Naive thymus-derived CD8-positive, alpha-beta T cell (primary cell): ENCODE measurements at regions of chr6 and their contacts with region 1.

Region 1: DNA sequence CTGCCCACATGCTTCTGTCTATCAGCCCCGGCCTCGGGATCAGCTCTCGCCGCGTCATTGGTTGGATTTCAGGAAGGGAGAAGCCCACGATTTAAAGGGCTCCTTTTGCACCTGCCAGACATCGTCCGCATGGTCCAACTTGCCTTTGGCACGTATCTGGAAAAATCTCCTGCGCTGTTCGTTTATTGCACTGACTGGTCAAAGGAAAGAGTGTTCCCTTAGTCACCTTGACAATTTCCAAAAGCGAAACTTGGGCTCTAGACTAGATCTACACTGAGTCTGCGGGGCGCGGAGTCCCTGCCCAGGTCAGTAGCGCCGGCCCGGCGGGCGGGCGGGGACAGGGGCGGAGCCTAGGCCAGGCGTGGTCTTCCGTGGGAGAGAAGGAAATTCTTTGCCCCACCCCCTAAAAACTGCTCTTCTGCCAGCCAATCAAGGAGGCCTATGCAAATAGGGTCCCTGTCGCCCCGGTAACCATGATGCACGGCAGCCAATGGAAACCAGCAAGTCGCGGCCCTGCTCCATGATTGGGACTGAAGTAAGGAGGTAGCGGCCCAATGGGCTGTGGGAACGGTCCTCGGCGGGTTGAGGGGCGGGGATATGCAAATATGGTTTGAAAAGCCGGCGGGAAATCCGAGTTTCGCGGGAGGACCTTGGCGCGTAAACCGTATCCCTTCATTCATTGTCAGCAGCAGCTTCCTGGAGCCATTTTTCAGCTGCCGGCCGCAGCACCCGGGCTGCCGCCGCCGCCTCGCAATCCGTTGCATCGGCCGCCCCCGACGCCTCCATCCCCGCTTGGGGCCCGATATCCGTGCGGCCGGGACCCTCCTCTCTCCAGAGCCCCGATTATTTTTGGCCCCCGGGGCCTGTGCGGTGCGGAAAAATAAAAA is at the start of gene E2F3:
- DNase-seq: peak; percentile 91 to 100 (median 99)
- ATAC-seq: peak; percentile 85 to 89
- H3K4me3 Mint-ChIP-seq: peak within 1 kb of the TSS; percentile 88 to 98 (median 95)
- H3K27ac Mint-ChIP-seq: peak within 1 kb of the TSS; percentile 66 to 96 (median 87)
- H3K4me1 Mint-ChIP-seq: peaks cover 16 to 40% (median 30%) of the 10 kb centered on the region in 4 donors
- H3K27me3 Mint-ChIP-seq: no peaks in the 10 kb centered on the region
- polyA plus RNA-seq, gene E2F3: 4.9 to 8.0 (median 5.9) TPM

Region 2: DNA sequence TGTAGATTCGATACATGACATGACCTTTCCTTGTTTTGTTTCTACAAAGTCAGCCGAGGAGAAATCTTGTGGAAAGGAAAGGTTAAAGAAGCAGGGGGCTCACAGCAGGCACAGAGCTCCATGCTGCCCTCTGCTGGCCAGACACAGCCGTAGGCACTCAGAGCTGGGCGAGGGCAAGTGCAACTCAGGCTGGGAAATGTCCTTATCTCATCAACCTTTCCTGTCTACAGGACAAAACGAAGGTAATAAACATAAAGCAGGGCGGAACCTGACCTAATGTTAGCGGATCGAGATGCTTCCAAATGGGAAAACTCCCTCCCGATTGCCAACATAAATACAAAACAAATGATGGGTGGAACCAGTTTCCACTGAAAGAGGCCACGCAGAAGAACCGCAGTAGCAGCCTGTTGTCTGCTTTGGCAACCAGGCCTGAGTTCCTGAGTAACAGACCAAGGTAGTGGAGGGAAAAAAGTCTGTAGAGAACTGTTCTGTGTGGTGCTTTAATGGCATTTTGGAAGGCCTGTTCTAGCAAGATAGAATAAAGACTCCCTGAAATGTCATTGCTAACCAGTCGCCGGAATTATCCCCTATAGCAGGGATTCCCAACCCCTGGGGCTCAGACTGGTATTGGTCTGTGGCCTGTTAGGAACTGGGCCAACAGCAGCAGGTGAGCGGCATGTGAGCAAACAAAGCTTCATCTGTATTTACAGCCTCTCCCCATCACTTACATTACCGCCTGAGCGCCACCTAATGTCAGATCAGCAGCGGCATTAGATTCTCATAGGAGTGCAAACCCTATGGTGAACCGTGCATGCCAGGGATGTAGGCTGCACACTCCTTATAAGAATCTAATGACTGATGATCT is 274.4 kb before region 1 on chr6:
- POLR2A ChIA-PET with region 1: no interaction called
- DNase-seq: peak; percentile 8 to 68 (median 48)
- ATAC-seq: peak; percentile 42 to 52
- H3K4me3 Mint-ChIP-seq: no peak overlapping the region
- H3K27ac Mint-ChIP-seq: peak overlapping the region in 1 of 10 donors; percentile 56
- H3K4me1 Mint-ChIP-seq: peaks cover 0 to 4% (median 3%) of the 10 kb centered on the region in 4 donors
- H3K27me3 Mint-ChIP-seq: peaks cover 0 to 4% (median 0%) of the 10 kb centered on the region in 5 donors

Region 3: DNA sequence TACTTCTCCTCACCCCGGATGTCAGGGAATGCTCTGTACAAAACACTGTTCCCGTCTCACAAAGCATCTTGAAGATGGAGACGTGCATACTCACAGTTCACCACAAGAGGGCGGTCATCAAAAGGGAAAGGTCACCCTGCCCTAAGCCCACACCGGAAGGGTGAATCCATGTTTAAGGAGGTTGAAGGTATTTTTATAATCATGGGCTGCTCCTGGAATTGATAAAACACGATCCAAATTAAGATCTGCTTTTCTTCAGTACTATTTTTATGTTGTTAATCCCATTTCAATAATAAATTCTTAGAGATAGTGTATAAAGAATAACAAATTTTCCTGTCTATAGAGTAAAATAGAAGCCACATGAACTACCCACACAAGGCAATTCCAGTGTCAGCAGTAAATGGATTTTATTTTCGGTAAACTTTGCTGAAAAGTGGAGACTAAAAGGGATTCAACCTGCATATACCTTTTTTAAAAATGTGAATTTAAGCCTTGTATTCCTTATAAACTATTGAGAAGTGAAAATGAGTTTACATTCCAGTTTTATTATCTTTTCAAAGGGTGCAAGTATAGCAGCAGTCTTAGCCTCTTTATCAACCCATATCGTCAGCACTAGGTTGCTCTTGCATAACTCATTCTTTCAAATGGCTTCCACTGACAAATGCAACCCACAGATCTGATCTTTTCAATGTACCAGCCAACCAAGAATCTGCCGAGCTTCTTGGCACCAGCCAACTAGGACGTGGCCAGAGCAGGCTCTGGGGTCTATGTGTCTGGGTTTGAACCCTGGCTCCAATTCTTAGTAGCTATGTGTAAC is 109.5 kb before region 1 on chr6:
- POLR2A ChIA-PET with region 1: interaction called, 10 read pairs
- DNase-seq: peak; percentile 41 to 86 (median 69)
- ATAC-seq: peak; percentile 82 to 93
- H3K4me3 Mint-ChIP-seq: peak overlapping the region in 7 of 10 donors; percentile 1 to 76 (median 43)
- H3K27ac Mint-ChIP-seq: peak overlapping the region in 6 of 10 donors; percentile 2 to 48 (median 16)
- H3K4me1 Mint-ChIP-seq: peaks cover 8 to 20% (median 18%) of the 10 kb centered on the region in 4 donors
- H3K27me3 Mint-ChIP-seq: no peaks in the 10 kb centered on the region

Region 4: GRCh38 chr6:20334334-20334733 is 67.1 kb before region 1 on chr6:
- POLR2A ChIA-PET with region 1: interaction called, 17 read pairs
- DNase-seq: no peak
- ATAC-seq: no peak
- H3K4me3 Mint-ChIP-seq: no peak overlapping the region
- H3K27ac Mint-ChIP-seq: peak overlapping the region in 1 of 10 donors; percentile 12
- H3K4me1 Mint-ChIP-seq: peaks cover 17 to 32% (median 23%) of the 10 kb centered on the region in 4 donors
- H3K27me3 Mint-ChIP-seq: no peaks in the 10 kb centered on the region

Region 5: DNA sequence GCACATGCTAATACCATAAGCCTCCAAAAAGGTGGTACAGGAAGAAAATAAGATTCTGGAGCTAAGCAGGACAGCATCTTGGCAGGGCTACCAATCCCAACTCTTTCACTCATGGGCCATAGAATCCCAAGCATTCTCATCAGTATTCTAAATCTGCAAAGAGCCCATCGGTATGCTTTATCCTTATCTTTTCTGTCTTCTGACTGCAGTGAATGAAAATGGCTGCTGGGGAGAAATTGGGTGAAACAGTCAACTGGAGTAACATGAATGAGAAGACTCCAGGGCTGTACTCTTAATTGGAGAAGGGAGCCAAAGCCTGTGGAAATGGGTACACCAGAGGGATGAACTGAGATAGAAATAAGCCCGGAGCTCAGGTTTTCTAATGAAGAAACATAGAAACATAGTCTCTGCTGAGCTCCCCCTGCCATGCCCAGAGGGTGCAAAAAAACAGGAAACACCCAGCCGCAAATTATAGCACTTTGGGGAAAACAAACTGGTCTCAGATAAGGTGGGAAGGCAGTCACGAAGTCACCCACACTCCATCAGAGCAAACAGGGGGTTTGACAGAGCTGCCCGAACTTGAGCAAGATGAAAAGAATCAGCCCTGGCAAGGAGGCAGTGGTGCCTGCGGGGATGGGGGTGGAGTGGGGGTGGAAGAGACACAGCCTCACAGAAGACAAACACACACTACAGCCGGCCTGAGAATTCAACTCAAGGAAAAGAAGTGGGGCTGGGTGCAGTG is 35.2 kb before region 1 on chr6:
- POLR2A ChIA-PET with region 1: interaction called, 216 read pairs
- DNase-seq: peak; percentile 7 to 81 (median 42)
- ATAC-seq: peak; percentile 85 to 94
- H3K4me3 Mint-ChIP-seq: peak overlapping the region; percentile 64 to 90 (median 81)
- H3K27ac Mint-ChIP-seq: peak overlapping the region; percentile 86 to 99 (median 96)
- H3K4me1 Mint-ChIP-seq: peaks cover 34 to 66% (median 64%) of the 10 kb centered on the region in 4 donors
- H3K27me3 Mint-ChIP-seq: no peaks in the 10 kb centered on the region

Region 6: GRCh38 chr6:20377623-20378265 is 23.7 kb before region 1 on chr6:
- POLR2A ChIA-PET with region 1: interaction called, 10 read pairs
- DNase-seq: no peak
- ATAC-seq: no peak
- H3K4me3 Mint-ChIP-seq: no peak overlapping the region
- H3K27ac Mint-ChIP-seq: peak overlapping the region in 2 of 10 donors; percentile 29 to 63
- H3K4me1 Mint-ChIP-seq: peaks cover 6 to 29% (median 12%) of the 10 kb centered on the region in 4 donors
- H3K27me3 Mint-ChIP-seq: no peaks in the 10 kb centered on the region

Region 7: GRCh38 chr6:20497216-20498040 is 96.0 kb after region 1 on chr6:
- POLR2A ChIA-PET with region 1: no interaction called
- DNase-seq: no peak
- ATAC-seq: no peak
- H3K4me3 Mint-ChIP-seq: no peak overlapping the region
- H3K27ac Mint-ChIP-seq: no peak overlapping the region
- H3K4me1 Mint-ChIP-seq: no peaks in the 10 kb centered on the region
- H3K27me3 Mint-ChIP-seq: no peaks in the 10 kb centered on the region